ENCODE measurements at regions of chr14 and their contacts with region 1.

Region 1: GRCh38 chr14:75088574-75089373 is 19.3 kb downstream of the ZC2HC1C start:
- DNase-seq: no peak
- H3K4me3 ChIP-seq: no peak overlapping the region
- CTCF ChIP-seq: peak; percentile 60

Region 2: GRCh38 chr14:74860906-74861733 is 227.7 kb before region 1 on chr14:
- CTCF ChIA-PET with region 1: interaction called, 83 read pairs
- POLR2A ChIA-PET with region 1: no interaction called
- DNase-seq: no peak
- H3K4me3 ChIP-seq: no peak overlapping the region
- CTCF ChIP-seq: peak; percentile 84

Region 3: DNA sequence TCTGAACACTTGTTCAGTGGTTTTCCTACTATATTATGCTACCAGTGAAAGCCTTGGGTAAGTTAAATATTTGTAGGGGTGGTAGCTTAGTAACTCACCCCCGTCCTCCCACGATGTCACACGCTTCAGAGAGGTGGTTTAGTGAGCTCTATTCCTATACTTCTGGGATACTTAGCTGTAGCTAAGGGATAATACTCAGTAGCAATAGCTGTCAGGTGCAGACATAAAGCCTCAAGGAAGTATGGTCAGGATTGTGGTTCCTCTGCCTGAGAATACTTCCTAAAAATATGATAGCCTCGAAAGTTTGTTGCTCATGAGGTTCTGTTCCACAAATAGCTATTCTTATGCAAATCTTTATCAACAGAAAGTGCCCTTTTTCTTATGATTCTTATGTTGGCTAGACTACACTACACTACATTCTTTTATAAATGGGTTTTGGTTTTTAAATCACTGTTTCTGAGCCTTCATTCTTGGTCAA is 195.1 kb before region 1 on chr14:
- CTCF ChIA-PET with region 1: interaction called, 296 read pairs
- POLR2A ChIA-PET with region 1: no interaction called
- DNase-seq: no peak
- H3K4me3 ChIP-seq: no peak overlapping the region
- CTCF ChIP-seq: no peak

Region 4: GRCh38 chr14:74922739-74923401 is 165.9 kb before region 1 on chr14 and contains the start of gene RPS6KL1:
- CTCF ChIA-PET with region 1: interaction called, 79 read pairs
- POLR2A ChIA-PET with region 1: no interaction called
- DNase-seq: no peak
- H3K4me3 ChIP-seq: peak within 1 kb of the TSS; percentile 49
- CTCF ChIP-seq: no peak

Region 5: DNA sequence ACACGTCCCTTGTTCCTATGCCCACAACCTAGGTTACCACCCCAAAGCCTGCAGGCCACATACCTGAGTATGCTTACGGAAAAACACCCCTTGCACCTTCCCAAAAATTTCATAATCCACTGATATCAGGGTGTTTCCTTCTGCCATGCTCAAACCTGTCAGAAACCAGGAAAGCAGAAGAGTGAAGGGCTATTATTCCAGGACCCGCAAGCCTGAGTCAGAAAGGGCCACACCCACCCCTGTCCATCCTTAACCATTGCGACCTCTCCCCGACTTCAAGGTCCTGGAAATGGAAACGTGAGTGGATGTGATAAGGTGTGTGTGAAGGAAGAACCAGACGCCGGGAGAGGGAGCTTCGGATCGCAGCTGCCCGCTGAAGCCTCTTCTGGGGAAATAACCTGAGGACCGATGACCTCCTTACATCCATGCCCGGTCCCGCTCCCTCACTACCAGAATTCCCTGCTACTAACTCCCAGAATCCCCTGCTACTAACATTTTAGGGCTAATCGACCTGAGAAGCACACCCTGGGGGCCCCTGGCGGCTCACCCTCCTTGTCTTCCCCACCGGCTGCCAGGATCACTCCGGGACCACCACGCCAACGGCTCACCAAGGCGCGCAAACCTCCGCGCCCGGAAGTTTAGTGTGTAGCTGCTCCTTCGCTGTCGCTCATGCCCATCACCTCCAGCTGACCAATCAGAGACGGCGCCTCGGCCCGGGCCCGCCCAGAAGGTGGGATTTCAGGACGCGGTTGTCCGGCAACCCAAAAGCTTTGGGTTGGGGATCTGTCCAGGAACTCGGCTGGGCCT is 25.2 kb before region 1 on chr14 and contains the start of gene ACYP1:
- CTCF ChIA-PET with region 1: interaction called, 52 read pairs
- POLR2A ChIA-PET with region 1: no interaction called
- DNase-seq: no peak
- H3K4me3 ChIP-seq: peak within 1 kb of the TSS; percentile 68
- CTCF ChIP-seq: no peak

Region 6: GRCh38 chr14:75113932-75114539 is 25.3 kb after region 1 on chr14:
- CTCF ChIA-PET with region 1: interaction called, 44 read pairs
- POLR2A ChIA-PET with region 1: no interaction called
- DNase-seq: no peak
- H3K4me3 ChIP-seq: no peak overlapping the region
- CTCF ChIP-seq: no peak